ENCODE measurements at regions of chr7 and their contacts with region 1.

Region 1: DNA sequence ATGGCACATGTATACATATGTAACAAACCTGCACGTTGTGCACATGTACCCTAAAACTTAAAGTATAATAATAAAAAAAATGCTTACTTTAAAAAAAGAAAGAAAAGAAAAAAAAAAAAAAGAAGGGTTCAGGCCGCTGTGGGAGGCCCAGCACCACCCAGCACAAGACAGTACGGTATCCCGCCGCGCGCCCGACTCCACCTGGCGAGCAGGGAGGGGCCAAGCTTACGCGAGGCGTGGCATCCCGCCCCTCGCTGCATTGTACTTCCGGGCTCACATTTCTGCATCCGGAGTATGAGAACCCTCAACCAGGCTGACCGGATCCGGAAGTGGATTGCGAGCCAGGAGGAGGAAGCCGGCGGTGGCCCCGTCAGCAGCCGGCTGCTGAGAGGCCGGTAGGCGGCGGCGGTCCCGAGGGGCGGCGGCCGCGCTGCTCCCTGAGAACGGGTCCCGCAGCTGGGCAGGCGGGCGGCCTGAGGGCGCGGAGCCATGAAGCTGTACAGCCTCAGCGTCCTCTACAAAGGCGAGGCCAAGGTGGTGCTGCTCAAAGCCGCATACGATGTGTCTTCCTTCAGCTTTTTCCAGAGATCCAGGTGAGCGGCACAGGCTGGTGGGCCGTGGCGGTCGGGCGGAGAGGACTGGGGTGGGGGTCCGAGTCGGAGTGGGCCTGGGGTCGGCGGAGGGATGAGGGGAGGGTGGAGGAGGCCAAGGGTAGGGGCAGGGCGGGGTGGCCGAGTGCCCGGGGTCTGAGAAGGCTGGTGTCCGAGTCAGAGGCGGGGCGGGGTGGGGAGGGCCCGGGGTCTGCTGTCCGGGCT is at the start of gene YKT6:
- DNase-seq: peak; percentile 98
- total RNA-seq, gene YKT6: 56.1 TPM

Region 2: GRCh38 chr7:44078521-44078920 is 122.3 kb before region 1 on chr7:
- intact Hi-C with region 1: loop called (anchors 2 kb)
- DNase-seq: no peak

Region 3: GRCh38 chr7:44123190-44124003 is 77.5 kb before region 1 on chr7 and contains the start of gene POLD2:
- intact Hi-C with region 1: loop called (anchors 5 kb)
- DNase-seq: peak; percentile 99
- total RNA-seq, gene POLD2: 88.1 TPM

Region 4: GRCh38 chr7:44131173-44132029 is 69.5 kb before region 1 on chr7:
- intact Hi-C with region 1: loop called (anchors 5 kb)
- DNase-seq: no peak

Region 5: GRCh38 chr7:44291066-44291732 is 90.3 kb after region 1 on chr7:
- intact Hi-C with region 1: no loop called
- DNase-seq: peak; percentile 89

Measured in cardiac septum (tissue), 1 donor.